Activated CD4-positive, alpha-beta memory T cell treated with anti-CD3 and anti-CD28 coated beads, Interleukin-2, amount 10 ng/mL, durations not matched to agents 7 days and 5 days (primary cell): ENCODE measurements at regions of chr2 and their contacts with region 1.

Region 1: GRCh38 chr2:74198461-74199274 is at the start of gene MTHFD2:
- DNase-seq: peak; percentile 94
- H3K4me3 Mint-ChIP-seq: peak within 1 kb of the TSS; percentile 99
- H3K27ac Mint-ChIP-seq: peak within 1 kb of the TSS; percentile 100
- H3K4me1 Mint-ChIP-seq: peaks cover 51% of the 10 kb centered on the region
- H3K27me3 Mint-ChIP-seq: no peaks in the 10 kb centered on the region
- total RNA-seq, gene MTHFD2: 264 to 277 TPM

Region 2: GRCh38 chr2:73736855-73737779 is 461.6 kb before region 1 on chr2 and contains the start of gene TPRKB:
- CTCF ChIA-PET with region 1: no interaction called
- POLR2A ChIA-PET with region 1: interaction called, 11 read pairs
- DNase-seq: peak; percentile 98
- H3K4me3 Mint-ChIP-seq: peak within 1 kb of the TSS; percentile 97
- H3K27ac Mint-ChIP-seq: peak within 1 kb of the TSS; percentile 91
- H3K4me1 Mint-ChIP-seq: peaks cover 20% of the 10 kb centered on the region
- H3K27me3 Mint-ChIP-seq: no peaks in the 10 kb centered on the region
- total RNA-seq, gene TPRKB: 32.9 TPM

Region 3: GRCh38 chr2:74119912-74120825 is 78.5 kb before region 1 on chr2:
- CTCF ChIA-PET with region 1: interaction called, 8 read pairs
- POLR2A ChIA-PET with region 1: interaction called, 10 read pairs
- DNase-seq: peak; percentile 87
- H3K4me3 Mint-ChIP-seq: peak overlapping the region; percentile 79
- H3K27ac Mint-ChIP-seq: peak overlapping the region; percentile 81
- H3K4me1 Mint-ChIP-seq: peaks cover 16% of the 10 kb centered on the region
- H3K27me3 Mint-ChIP-seq: peaks cover 2% of the 10 kb centered on the region

Region 4: GRCh38 chr2:74130163-74130995 is 68.3 kb before region 1 on chr2:
- CTCF ChIA-PET with region 1: no interaction called
- POLR2A ChIA-PET with region 1: no interaction called
- DNase-seq: no peak
- H3K4me3 Mint-ChIP-seq: no peak overlapping the region
- H3K27ac Mint-ChIP-seq: no peak overlapping the region
- H3K4me1 Mint-ChIP-seq: peaks cover 2% of the 10 kb centered on the region
- H3K27me3 Mint-ChIP-seq: peaks cover 12% of the 10 kb centered on the region

Region 5: GRCh38 chr2:74168739-74169138 is 29.9 kb before region 1 on chr2:
- CTCF ChIA-PET with region 1: no interaction called
- POLR2A ChIA-PET with region 1: interaction called, 23 read pairs
- DNase-seq: no peak
- H3K4me3 Mint-ChIP-seq: no peak overlapping the region
- H3K27ac Mint-ChIP-seq: peak overlapping the region; percentile 5
- H3K4me1 Mint-ChIP-seq: peaks cover 19% of the 10 kb centered on the region
- H3K27me3 Mint-ChIP-seq: no peaks in the 10 kb centered on the region

Region 6: GRCh38 chr2:74267068-74267467 is 68.4 kb after region 1 on chr2:
- CTCF ChIA-PET with region 1: no interaction called
- POLR2A ChIA-PET with region 1: no interaction called
- DNase-seq: peak; percentile 80
- H3K4me3 Mint-ChIP-seq: no peak overlapping the region
- H3K27ac Mint-ChIP-seq: peak overlapping the region; percentile 85
- H3K4me1 Mint-ChIP-seq: peaks cover 31% of the 10 kb centered on the region
- H3K27me3 Mint-ChIP-seq: no peaks in the 10 kb centered on the region